ENCODE measurements at regions of chr3 and their contacts with region 1.

Region 1: DNA sequence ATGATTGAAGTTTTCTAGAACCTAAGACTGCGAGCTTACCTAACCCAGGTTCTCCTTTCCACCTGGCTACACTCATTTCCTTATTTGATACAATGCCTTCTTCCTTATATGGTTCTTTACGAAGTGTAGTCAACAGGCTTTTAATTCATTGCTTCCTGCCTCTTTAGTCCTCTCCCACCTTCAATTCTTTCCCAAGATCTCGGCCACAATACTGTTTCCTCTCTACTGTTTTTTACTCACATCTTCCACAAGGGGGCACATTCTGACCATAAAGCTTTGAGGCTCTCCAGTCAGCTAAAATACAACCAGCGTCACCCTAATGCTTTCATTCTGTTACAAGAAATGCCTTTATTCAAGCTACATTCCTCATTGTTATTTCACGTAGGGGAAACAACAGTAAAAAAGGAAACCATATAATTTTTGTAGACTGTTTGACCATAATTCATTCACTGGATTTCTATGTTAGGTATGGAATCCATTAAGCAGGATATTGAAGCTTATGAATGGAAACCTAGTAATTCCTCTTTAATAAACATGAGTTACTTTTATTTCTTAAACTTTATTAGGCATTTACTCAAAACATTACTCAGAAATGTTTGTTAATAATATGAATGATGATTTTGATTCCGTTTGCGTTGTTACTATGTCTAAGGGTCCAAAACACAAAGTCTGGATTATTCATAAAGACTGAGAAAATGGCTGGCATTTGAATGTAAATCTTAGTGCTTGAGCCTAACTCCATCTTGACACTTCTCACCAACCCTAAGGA is 29.5 kb upstream of the VEPH1 start:
- DNase-seq: peak; percentile 58 to 64
- ATAC-seq: peak; percentile 90 to 97
- H3K4me3 ChIP-seq: no peak overlapping the region
- H3K27ac ChIP-seq: no peak overlapping the region
- H3K4me1 ChIP-seq: no peaks in the 10 kb centered on the region
- CTCF ChIP-seq: peak; percentile 83
- EP300 ChIP-seq: no peak
- POLR2A ChIP-seq: no peak
- RAD21 ChIP-seq: peak; percentile 82 to 88

Region 2: DNA sequence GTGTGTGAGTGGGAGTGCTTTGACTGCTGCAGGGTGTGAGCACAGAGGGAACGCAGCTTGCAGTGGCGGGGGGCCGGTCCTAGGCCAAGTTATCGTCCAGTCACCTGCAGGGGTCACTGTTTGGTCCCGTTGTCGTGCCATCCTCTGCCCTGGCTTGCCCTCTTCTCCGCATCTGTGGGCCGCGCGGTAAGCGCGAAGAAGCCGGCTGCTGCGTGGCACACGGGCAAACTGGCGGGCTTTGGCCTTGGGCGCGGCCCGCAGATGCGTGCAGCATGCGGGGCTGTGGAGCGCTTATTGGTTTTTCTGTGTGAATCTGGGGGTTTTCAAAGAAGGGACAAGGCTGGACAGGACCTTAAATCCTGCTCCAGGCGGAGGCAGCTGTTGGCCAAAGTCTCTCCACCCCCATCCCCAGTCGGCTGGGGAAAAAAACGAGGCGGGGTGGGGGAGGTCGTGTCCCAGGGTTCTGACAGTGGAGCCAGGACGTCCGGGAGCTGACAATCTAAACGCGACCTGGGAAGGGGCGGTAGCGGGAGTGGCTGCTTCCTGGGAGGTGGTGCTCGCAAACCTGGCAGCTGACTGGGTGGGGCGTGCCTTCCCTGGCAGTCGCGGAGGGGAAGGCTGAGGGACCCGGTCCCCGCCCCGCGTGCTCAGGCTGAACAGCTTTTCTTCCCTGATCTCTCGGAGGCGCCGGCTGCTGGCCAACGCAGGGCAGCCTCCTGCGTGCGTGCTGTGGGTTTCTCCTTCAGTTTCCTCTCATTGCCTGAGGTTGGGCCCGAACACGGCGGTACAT is 10.2 kb after region 1 on chr3:
- CTCF ChIA-PET with region 1: interaction called, 55 read pairs
- POLR2A ChIA-PET with region 1: interaction called, 5 read pairs
- DNase-seq: peak; percentile 48 to 68
- ATAC-seq: peak; percentile 92 to 93
- H3K4me3 ChIP-seq: peak overlapping the region; percentile 59
- H3K27ac ChIP-seq: peak overlapping the region; percentile 70 to 82
- H3K4me1 ChIP-seq: no peaks in the 10 kb centered on the region
- CTCF ChIP-seq: peak; percentile 40
- EP300 ChIP-seq: no peak
- POLR2A ChIP-seq: no peak; the same call in 1 of the 2 replicates
- RAD21 ChIP-seq: no peak

Region 3: DNA sequence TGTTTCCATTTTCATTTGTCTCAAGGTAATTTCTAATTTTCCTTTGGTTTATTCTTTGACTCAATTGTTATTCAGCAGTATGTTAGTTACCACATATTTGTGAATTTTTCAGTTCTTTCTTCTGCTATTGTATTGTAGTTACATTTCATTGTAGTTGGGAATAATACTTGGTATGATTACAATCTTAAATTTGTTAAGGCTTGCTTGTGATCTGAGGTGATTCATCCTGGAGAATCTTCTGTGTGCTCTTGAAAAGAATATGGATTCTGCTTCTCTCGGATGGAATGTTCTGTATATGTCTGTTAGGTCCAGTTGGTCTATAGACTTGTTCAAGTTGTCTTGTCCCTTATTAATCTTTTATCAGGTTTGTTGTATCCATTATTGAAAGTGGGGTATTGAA is 33.9 kb after region 1 on chr3:
- CTCF ChIA-PET with region 1: interaction called, 16 read pairs
- POLR2A ChIA-PET with region 1: no interaction called
- DNase-seq: no peak
- ATAC-seq: no peak
- H3K4me3 ChIP-seq: no peak overlapping the region
- H3K27ac ChIP-seq: no peak overlapping the region
- H3K4me1 ChIP-seq: no peaks in the 10 kb centered on the region
- CTCF ChIP-seq: no peak
- EP300 ChIP-seq: no peak
- POLR2A ChIP-seq: no peak
- RAD21 ChIP-seq: no peak

Region 4: DNA sequence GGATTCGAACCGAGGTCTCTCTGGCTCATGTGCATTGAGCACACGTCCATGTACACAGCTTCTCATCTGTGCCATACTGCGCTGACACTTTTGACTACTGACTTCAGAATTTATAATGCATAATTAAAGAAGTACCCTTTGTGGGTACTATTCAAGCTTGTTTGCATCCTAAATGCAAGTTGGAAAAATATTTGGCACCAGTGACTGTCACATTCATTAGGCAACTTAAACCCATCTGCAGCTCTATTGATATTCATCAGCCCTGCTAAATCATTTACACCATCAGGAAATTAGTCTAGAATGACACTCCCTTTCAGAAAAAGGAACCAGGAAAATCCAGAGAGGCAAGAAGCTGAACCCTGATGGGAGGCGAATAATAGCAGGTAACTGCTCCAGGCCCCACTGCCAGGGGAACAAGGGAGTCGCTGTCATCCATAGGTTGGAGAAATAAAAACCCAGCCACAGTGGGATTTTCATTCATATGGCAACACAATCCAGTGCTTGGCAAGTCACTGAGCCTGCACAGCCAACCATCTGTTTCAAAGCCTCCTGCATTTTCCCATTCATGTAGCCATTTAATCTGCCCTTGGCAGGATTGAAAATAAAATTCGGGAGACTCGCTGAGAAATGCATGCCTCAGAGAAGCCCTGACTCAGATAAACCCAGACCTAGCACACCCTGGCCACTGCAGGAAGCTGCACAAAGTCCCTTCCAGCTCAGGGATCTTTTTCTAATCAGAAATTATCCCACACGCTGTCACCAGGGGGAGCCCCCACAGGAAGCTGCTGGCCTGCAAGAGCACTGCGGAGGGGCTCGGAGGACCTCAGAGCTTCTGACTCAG is 73.5 kb after region 1 on chr3:
- CTCF ChIA-PET with region 1: interaction called, 15 read pairs
- POLR2A ChIA-PET with region 1: no interaction called
- DNase-seq: peak; percentile 64 to 70
- ATAC-seq: peak; percentile 94 to 99
- H3K4me3 ChIP-seq: no peak overlapping the region
- H3K27ac ChIP-seq: no peak overlapping the region
- H3K4me1 ChIP-seq: no peaks in the 10 kb centered on the region
- CTCF ChIP-seq: peak; percentile 66
- EP300 ChIP-seq: no peak
- POLR2A ChIP-seq: no peak
- RAD21 ChIP-seq: peak; percentile 48 to 57; a peak in 4 of 5 replicates

Region 5: GRCh38 chr3:158532099-158532734 is 999.5 kb after region 1 on chr3:
- CTCF ChIA-PET with region 1: interaction called, 12 read pairs
- POLR2A ChIA-PET with region 1: no interaction called
- DNase-seq: peak; percentile 23 to 71
- ATAC-seq: peak; percentile 59 to 60; a peak in 1 of 6 replicates
- H3K4me3 ChIP-seq: no peak overlapping the region
- H3K27ac ChIP-seq: no peak overlapping the region
- H3K4me1 ChIP-seq: no peaks in the 10 kb centered on the region
- CTCF ChIP-seq: peak; percentile 83
- EP300 ChIP-seq: no peak
- POLR2A ChIP-seq: no peak
- RAD21 ChIP-seq: peak; percentile 83 to 87